CD8-positive, alpha-beta T cell (primary cell): ENCODE measurements at regions of chr5 and their contacts with region 1.

Region 1: DNA sequence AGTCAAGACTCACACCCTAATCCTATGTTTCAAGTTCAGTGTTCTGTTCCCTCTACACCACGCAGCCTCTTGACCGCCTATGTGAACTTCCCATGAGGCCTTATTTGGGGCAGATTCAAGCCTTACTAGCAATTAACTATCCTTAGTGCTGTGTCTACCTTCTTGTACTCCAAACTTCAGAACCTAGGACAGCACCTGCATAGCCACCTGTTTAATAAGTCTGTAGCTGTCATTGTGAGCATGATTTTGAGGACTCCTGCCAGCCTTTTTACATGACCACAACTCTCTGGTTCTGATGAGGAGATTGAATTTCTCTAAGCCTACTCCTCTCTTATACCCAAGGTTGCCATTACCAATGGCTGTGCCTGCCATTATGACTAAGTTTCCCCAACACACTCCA is 50.8 kb upstream of the PCSK1 start:
- DNase-seq: peak in 2 of 9 experiments; percentile 14 to 23
- ATAC-seq: no peak
- H3K4me3 ChIP-seq: no peak overlapping the region
- H3K4me3 Mint-ChIP-seq: no peak overlapping the region
- H3K27ac ChIP-seq: no peak overlapping the region
- H3K27ac Mint-ChIP-seq: no peak overlapping the region
- H3K4me1 ChIP-seq: no peaks in the 10 kb centered on the region
- H3K4me1 Mint-ChIP-seq: no peaks in the 10 kb centered on the region
- H3K27me3 ChIP-seq: peaks cover 0 to 3% of the 10 kb centered on the region in 2 experiments
- H3K27me3 Mint-ChIP-seq: peaks cover 5% of the 10 kb centered on the region
- CTCF ChIP-seq: no peak

Region 2: DNA sequence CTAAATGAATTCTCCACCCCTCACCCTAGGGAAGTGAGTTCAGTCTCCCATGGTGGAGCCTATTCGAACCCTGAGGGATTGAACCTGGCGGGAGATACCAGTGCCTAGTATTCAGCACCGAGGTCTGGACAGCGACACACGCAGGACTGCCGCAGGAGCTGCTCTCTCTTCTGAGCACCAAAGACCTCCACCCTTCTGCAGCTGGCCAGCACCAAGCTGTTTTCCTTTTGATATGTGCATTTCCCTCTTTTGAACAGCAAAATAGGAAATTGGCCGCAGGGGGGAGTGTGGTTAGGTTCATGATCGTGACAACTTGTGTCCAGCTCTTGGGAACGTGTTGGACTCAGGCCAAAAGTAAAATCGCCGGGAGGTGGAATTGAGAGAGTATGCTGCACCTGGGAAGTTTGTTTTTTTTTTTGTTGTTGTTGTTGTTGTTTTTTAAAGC is 49.7 kb before region 1 on chr5:
- CTCF ChIA-PET with region 1: no interaction called
- POLR2A ChIA-PET with region 1: no interaction called
- intact Hi-C with region 1: loop called in 1 of 2 experiments (anchors 5 kb)
- DNase-seq: peak in 7 of 9 experiments; percentile 2 to 36 (median 28)
- ATAC-seq: peak; percentile 62
- H3K4me3 ChIP-seq: no peak overlapping the region
- H3K4me3 Mint-ChIP-seq: no peak overlapping the region
- H3K27ac ChIP-seq: no peak overlapping the region
- H3K27ac Mint-ChIP-seq: no peak overlapping the region
- H3K4me1 ChIP-seq: no peaks in the 10 kb centered on the region
- H3K4me1 Mint-ChIP-seq: peaks cover 4% of the 10 kb centered on the region
- H3K27me3 ChIP-seq: peaks cover 18 to 25% of the 10 kb centered on the region in 2 experiments
- H3K27me3 Mint-ChIP-seq: peaks cover 55% of the 10 kb centered on the region
- CTCF ChIP-seq: no peak

Region 3: GRCh38 chr5:97131139-97131710 is 647.3 kb after region 1 on chr5:
- CTCF ChIA-PET with region 1: no interaction called
- POLR2A ChIA-PET with region 1: no interaction called
- intact Hi-C with region 1: no loop called
- DNase-seq: no peak
- ATAC-seq: no peak
- H3K4me3 ChIP-seq: no peak overlapping the region
- H3K4me3 Mint-ChIP-seq: no peak overlapping the region
- H3K27ac ChIP-seq: no peak overlapping the region
- H3K27ac Mint-ChIP-seq: no peak overlapping the region
- H3K4me1 ChIP-seq: no peaks in the 10 kb centered on the region
- H3K4me1 Mint-ChIP-seq: peaks cover 5% of the 10 kb centered on the region
- H3K27me3 ChIP-seq: no peaks in the 10 kb centered on the region
- H3K27me3 Mint-ChIP-seq: no peaks in the 10 kb centered on the region
- CTCF ChIP-seq: no peak